ENCODE measurements at regions of chr15 and their contacts with region 1.

Region 1: DNA sequence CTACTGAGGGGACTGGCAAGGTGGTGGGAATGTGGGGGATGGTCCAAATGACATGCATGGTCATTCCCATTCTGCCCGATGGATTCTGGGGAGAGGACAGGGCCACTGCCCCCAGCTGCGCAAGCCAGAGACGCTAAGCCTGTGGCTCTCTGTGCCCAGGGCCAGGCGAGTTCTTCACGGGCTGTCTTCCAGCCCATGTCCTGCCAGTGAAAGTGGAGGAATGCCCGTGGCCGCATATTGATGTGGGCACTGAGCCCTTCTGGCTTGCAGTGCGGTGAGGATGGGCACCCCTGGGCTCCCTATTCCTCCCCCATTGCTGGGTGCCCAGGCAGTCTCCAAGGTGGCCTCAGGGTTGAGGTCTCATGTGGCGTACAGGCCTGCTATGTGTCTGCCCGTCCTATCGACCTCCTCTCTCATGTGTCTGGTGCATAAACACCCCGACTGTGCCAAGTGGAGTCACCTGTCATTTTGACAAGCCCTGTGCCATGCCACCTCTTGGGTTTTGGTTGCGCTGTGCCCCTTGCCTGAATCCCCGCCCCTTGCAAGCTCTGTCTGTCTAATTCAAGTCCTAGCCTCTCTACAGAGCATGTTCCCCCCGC is 116.8 kb downstream of the TMEM266 start:
- DNase-seq: peak; percentile 94 to 97
- ATAC-seq: peak; percentile 54 to 62
- H3K4me3 ChIP-seq: no peak overlapping the region
- H3K27ac ChIP-seq: peak overlapping the region; percentile 93 to 98 (median 96)
- H3K4me1 ChIP-seq: peaks cover 47 to 54% of the 10 kb centered on the region in 2 donors
- H3K27me3 ChIP-seq: no peaks in the 10 kb centered on the region
- CTCF ChIP-seq: no peak
- POLR2A ChIP-seq: peak; percentile 38 to 65

Region 2: DNA sequence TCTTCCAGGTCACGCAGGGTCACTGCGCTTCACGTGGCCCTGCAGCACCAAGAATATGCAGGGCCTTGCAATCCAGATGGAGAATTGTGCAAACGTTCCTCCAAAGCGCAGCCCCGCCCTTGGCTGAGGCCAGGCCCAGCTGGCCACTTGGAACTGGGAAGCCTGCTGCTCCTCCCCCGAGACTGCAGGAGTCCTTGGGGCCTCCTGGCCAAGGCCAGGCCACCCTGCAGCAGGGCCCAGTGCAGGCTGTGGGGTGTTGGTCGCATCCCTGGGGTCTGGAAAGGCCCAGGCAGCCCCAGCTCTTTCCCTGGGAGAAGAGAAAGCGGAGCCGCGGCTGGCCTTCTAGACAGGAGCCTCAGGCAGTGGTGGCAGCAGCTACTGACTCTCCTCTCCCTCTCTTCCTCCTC is 13.1 kb before region 1 on chr15:
- in situ Hi-C with region 1: no loop called
- intact Hi-C with region 1: loop called (anchors 1 kb)
- DNase-seq: peak; percentile 90 to 98
- ATAC-seq: peak; percentile 93 to 96
- H3K4me3 ChIP-seq: no peak overlapping the region
- H3K27ac ChIP-seq: peak overlapping the region; percentile 91 to 96 (median 93)
- H3K4me1 ChIP-seq: peaks cover 26 to 29% of the 10 kb centered on the region in 2 donors
- H3K27me3 ChIP-seq: no peaks in the 10 kb centered on the region
- CTCF ChIP-seq: no peak
- POLR2A ChIP-seq: peak; percentile 44 to 67

Measured in gastrocnemius medialis (tissue), 4 donors.